ENCODE measurements at regions of chr2 and their contacts with region 1.

Region 1: GRCh38 chr2:119759451-119760236 is at the start of gene PTPN4:
- DNase-seq: peak; percentile 96 to 97
- ATAC-seq: peak; percentile 97 to 99 (median 98)
- H3K4me3 ChIP-seq: peak within 1 kb of the TSS; percentile 69 to 94 (median 86)
- H3K27ac ChIP-seq: peak within 1 kb of the TSS; percentile 81 to 97 (median 94)
- H3K4me1 ChIP-seq: peaks cover 0 to 55% (median 32%) of the 10 kb centered on the region in 9 donors
- H3K27me3 ChIP-seq: no peaks in the 10 kb centered on the region
- CTCF ChIP-seq: peak in 1 of 9 donors; percentile 13
- total RNA-seq, gene PTPN4: 25.9 to 56.1 (median 49.8) TPM

Region 2: GRCh38 chr2:119455066-119455718 is 304.5 kb before region 1 on chr2:
- intact Hi-C with region 1: no loop called
- DNase-seq: no peak
- ATAC-seq: peak in 1 of 8 donors; percentile 42
- H3K4me3 ChIP-seq: no peak overlapping the region
- H3K27ac ChIP-seq: no peak overlapping the region
- H3K4me1 ChIP-seq: no peaks in the 10 kb centered on the region
- H3K27me3 ChIP-seq: peaks cover 0 to 6% (median 0%) of the 10 kb centered on the region in 7 donors
- CTCF ChIP-seq: no peak

Region 3: GRCh38 chr2:119694845-119695521 is 64.7 kb before region 1 on chr2:
- intact Hi-C with region 1: loop called in 2 of 10 experiments (anchors 2 to 10 kb)
- DNase-seq: no peak
- ATAC-seq: no peak
- H3K4me3 ChIP-seq: no peak overlapping the region
- H3K27ac ChIP-seq: no peak overlapping the region
- H3K4me1 ChIP-seq: no peaks in the 10 kb centered on the region
- H3K27me3 ChIP-seq: peaks cover 0 to 15% (median 0%) of the 10 kb centered on the region in 7 donors
- CTCF ChIP-seq: no peak

Region 4: DNA sequence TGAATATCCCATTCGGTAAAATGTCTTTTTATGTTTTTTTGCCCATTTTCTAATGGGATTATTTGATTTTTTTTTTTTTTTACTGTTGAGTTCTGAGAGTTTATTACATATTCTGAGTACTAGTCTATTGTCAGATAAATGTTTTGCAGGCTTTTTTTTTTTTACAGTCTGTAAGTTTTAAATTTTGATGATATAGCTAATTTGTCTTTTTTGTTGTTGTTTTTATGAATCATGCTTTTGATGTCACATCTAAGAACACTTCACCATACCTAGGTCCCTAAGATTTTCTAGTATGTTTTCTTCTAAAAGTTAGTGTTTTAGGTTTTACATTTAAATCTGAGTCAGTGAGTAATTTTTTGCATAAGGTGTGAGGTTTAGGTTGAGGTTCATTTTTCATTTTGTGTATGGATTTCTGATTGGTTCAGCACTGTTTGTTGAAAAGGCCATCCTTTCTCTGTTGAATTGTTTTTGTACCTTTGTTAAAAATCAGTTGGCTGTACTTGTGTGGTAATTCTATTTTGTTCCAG is 40.8 kb after region 1 on chr2:
- intact Hi-C with region 1: loop called in 1 of 10 experiments (anchors 5 kb)
- DNase-seq: no peak
- ATAC-seq: no peak
- H3K4me3 ChIP-seq: no peak overlapping the region
- H3K27ac ChIP-seq: no peak overlapping the region
- H3K4me1 ChIP-seq: peaks cover 0 to 39% (median 14%) of the 10 kb centered on the region in 9 donors
- H3K27me3 ChIP-seq: no peaks in the 10 kb centered on the region
- CTCF ChIP-seq: no peak

Region 5: GRCh38 chr2:119826370-119826961 is 66.8 kb after region 1 on chr2:
- intact Hi-C with region 1: loop called in 6 of 10 experiments (anchors 2 to 5 kb)
- DNase-seq: no peak
- ATAC-seq: peak in 3 of 8 donors; percentile 57 to 59 (median 57)
- H3K4me3 ChIP-seq: no peak overlapping the region
- H3K27ac ChIP-seq: no peak overlapping the region
- H3K4me1 ChIP-seq: peaks cover 0 to 21% (median 7%) of the 10 kb centered on the region in 9 donors
- H3K27me3 ChIP-seq: no peaks in the 10 kb centered on the region
- CTCF ChIP-seq: peak in 8 of 9 donors; percentile 17 to 72 (median 58)

Region 6: DNA sequence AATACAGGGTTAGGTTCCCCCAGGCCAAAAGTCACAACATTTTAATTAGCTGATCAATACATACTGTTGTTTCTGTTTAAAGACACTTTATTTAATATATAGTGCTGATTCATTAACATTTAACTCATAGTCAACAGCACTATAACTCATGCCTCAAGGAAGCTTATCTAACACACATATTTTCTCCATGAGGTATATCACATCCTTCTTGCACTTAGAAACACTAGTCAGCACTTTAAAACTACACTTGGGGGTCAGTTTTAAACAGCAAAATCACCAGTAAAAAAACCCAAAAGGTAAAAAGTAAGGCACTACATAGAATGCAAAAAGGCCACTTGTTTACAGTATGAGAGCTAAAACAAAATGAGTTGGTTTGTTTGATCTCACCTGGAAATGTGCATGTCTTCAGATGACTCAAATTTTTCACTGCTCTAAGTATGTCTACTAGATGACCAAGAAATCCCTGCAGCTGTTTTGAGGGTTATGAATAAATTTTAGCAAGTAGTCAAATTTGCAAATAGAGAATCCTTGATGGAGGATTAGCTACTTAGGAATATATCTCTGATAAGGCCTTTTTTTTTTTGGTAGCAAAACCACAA is 199.1 kb after region 1 on chr2:
- intact Hi-C with region 1: loop called in 1 of 10 experiments (anchors 10 kb)
- DNase-seq: no peak
- ATAC-seq: no peak
- H3K4me3 ChIP-seq: no peak overlapping the region
- H3K27ac ChIP-seq: no peak overlapping the region
- H3K4me1 ChIP-seq: peaks cover 0 to 5% (median 0%) of the 10 kb centered on the region in 9 donors
- H3K27me3 ChIP-seq: no peaks in the 10 kb centered on the region
- CTCF ChIP-seq: no peak

Region 7: GRCh38 chr2:120174963-120175581 is 415.4 kb after region 1 on chr2:
- intact Hi-C with region 1: loop called in 6 of 10 experiments (anchors 5 to 10 kb)
- DNase-seq: peak in 1 of 2 donors; percentile 35
- ATAC-seq: peak in 1 of 8 donors; percentile 45
- H3K4me3 ChIP-seq: no peak overlapping the region
- H3K27ac ChIP-seq: no peak overlapping the region
- H3K4me1 ChIP-seq: peaks cover 0 to 24% (median 13%) of the 10 kb centered on the region in 9 donors
- H3K27me3 ChIP-seq: no peaks in the 10 kb centered on the region
- CTCF ChIP-seq: peak; percentile 51 to 87 (median 80)

Measured in heart right ventricle (tissue), 16 donors.